ENCODE measurements at regions of chr10 and their contacts with region 1.

Region 1: GRCh38 chr10:132452631-132453469 is 55.9 kb downstream of the PWWP2B start:
- DNase-seq: peak; percentile 92
- H3K4me3 ChIP-seq: peak overlapping the region in 3 of 4 donors; percentile 3 to 30 (median 12)
- H3K27ac ChIP-seq: peak overlapping the region in 3 of 4 donors; percentile 10 to 63 (median 52)
- H3K4me1 ChIP-seq: peaks cover 0 to 21% (median 21%) of the 10 kb centered on the region in 4 donors
- H3K27me3 ChIP-seq: no peaks in the 10 kb centered on the region
- CTCF ChIP-seq: peak; percentile 88 to 99 (median 93)
- EP300 ChIP-seq: no peak
- POLR2A ChIP-seq: no peak

Region 2: GRCh38 chr10:132223156-132223590 is 229.7 kb before region 1 on chr10:
- intact Hi-C with region 1: loop called (anchors 5 kb)
- DNase-seq: peak; percentile 90
- H3K4me3 ChIP-seq: no peak overlapping the region
- H3K27ac ChIP-seq: no peak overlapping the region
- H3K4me1 ChIP-seq: peaks cover 0 to 8% (median 2%) of the 10 kb centered on the region in 4 donors
- H3K27me3 ChIP-seq: no peaks in the 10 kb centered on the region
- CTCF ChIP-seq: peak; percentile 76 to 94 (median 92)
- EP300 ChIP-seq: no peak
- POLR2A ChIP-seq: no peak

Region 3: GRCh38 chr10:132319853-132320669 is 132.8 kb before region 1 on chr10:
- intact Hi-C with region 1: no loop called
- DNase-seq: no peak
- H3K4me3 ChIP-seq: no peak overlapping the region
- H3K27ac ChIP-seq: no peak overlapping the region
- H3K4me1 ChIP-seq: no peaks in the 10 kb centered on the region
- H3K27me3 ChIP-seq: no peaks in the 10 kb centered on the region
- CTCF ChIP-seq: no peak
- EP300 ChIP-seq: no peak
- POLR2A ChIP-seq: no peak

Region 4: GRCh38 chr10:132387764-132388210 is 65.1 kb before region 1 on chr10:
- intact Hi-C with region 1: loop called (anchors 1 kb)
- DNase-seq: peak; percentile 86
- H3K4me3 ChIP-seq: peak overlapping the region in 2 of 4 donors; percentile 5 to 12
- H3K27ac ChIP-seq: peak overlapping the region in 2 of 4 donors; percentile 10 to 47
- H3K4me1 ChIP-seq: peaks cover 0 to 10% (median 0%) of the 10 kb centered on the region in 4 donors
- H3K27me3 ChIP-seq: no peaks in the 10 kb centered on the region
- CTCF ChIP-seq: peak; percentile 41 to 66 (median 64)
- EP300 ChIP-seq: no peak
- POLR2A ChIP-seq: no peak

Region 5: DNA sequence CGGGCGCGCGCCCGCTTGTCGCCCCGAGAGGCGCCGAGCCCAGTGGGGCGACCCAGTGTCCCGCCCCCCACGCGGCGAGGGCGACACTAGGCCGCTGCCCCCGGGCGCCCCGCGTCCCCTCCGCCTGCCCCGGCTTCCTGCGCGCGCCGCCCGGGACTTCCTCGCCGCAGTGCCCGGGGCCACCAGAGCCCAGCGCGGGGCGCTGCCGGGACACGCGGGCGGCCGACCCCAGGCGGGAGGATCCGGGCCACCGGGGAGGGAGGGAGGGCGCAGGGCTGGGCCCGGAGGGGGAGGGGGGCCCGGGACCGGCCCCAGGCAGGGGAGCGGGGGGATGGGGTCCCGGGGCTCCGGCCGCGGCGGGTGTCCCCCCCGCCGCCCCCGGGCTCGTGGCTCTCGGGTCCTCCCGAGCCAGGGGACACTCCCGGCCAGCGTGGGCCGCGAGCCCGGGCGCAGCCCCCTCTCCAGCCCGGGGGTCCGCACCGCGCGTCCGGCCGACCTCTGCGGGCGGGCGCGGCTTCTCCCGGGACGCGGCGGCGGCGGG is 56.3 kb before region 1 on chr10:
- intact Hi-C with region 1: loop called (anchors 2 kb)
- DNase-seq: peak; percentile 85
- H3K4me3 ChIP-seq: peak overlapping the region; percentile 34 to 99 (median 76)
- H3K27ac ChIP-seq: peak overlapping the region; percentile 91 to 99 (median 96)
- H3K4me1 ChIP-seq: peaks cover 0 to 52% (median 51%) of the 10 kb centered on the region in 4 donors
- H3K27me3 ChIP-seq: no peaks in the 10 kb centered on the region
- CTCF ChIP-seq: peak in 1 of 4 experiments; percentile 43
- EP300 ChIP-seq: no peak
- POLR2A ChIP-seq: no peak

Region 6: DNA sequence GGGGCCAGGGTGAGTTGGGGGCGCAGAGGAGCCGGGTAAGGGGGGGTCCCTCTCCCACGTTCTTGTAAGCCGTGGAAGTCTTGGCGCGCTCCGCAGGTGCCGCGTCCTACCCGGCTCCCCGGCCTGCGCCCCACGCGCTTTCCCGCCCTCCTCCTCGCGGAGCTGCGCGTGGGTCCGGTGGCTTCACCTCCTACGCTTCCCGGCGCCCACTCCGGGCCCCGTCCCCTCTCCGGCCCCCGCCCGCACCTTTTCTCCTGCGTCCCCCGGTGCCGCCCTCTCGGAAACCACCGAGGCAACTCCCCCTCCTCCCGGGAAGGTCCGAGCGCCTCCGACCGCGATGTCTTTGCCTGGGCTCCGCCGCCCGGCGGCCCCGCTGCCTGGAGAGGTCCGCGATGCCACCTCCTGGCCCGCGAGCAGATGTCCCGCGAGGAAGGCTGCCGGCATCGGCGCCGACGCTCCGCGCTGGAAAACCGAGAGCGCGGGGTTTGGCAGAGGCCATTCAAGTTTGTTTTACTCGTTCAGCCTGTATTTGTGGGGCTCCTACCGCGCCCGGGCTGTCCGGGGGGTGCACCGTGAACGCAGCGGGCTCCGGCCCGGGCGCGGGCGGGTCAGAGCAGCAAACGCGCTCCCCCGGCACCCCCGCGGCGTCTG is 335.5 kb after region 1 on chr10:
- intact Hi-C with region 1: loop called (anchors 10 kb)
- DNase-seq: no peak
- H3K4me3 ChIP-seq: peak overlapping the region in 2 of 4 donors; percentile 5 to 21
- H3K27ac ChIP-seq: no peak overlapping the region
- H3K4me1 ChIP-seq: peaks cover 0 to 44% (median 40%) of the 10 kb centered on the region in 4 donors
- H3K27me3 ChIP-seq: peaks cover 54 to 64% (median 62%) of the 10 kb centered on the region in 3 donors
- CTCF ChIP-seq: peak in 1 of 4 experiments; percentile 14
- EP300 ChIP-seq: no peak
- POLR2A ChIP-seq: no peak

Measured in sigmoid colon (tissue), 7 donors.